Activated naive CD4-positive, alpha-beta T cell treated with anti-CD3 and anti-CD28 coated beads for 36 hours (primary cell): ENCODE measurements at regions of chr16 and their contacts with region 1.

Region 1: DNA sequence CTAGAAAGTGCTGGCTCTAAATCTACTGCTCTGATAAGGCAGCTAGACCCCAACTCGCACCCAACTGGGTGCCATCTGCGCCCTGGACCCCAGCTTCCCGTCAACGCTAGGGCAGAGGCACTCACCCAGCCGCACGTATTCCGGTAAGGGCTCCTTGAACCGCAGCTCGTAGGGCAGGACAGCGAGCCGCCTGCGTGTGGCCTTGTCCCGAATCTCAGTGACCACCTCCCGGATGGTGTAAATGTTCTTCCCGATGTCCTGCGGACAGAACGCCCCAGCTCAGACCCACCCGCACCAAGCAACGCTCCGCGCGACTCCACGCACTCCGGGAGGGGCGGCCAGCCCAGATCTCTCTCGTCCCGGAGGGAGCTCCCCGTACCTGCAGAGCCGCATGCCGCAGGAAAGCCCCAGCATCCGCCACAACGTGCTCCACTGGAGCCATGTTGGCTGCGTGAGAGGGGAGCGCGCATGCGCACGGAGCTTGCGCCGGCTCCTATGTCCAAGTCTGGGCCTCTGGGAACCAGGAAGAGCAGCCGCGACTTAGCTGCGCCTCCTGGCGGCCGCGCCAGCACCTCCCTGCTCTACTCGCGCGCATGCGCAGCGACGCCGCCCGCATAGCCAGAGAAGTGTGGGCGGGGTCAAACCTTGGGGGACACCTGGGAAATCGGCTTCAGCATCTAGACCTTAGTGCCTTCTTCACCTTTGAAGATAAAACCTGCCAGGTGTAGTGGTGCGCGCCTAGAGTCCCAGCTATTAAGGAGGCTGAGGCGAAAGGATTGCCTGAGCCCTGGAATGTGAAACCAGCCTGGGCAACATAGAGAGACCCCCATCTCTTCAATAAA is at the start of gene NOB1:
- DNase-seq: peak; percentile 98
- H3K4me3 Mint-ChIP-seq: peak within 1 kb of the TSS; percentile 97
- H3K27ac Mint-ChIP-seq: peak within 1 kb of the TSS; percentile 97
- H3K4me1 Mint-ChIP-seq: peaks cover 22% of the 10 kb centered on the region
- H3K27me3 Mint-ChIP-seq: no peaks in the 10 kb centered on the region
- total RNA-seq, gene NOB1: 110 to 114 TPM

Region 2: DNA sequence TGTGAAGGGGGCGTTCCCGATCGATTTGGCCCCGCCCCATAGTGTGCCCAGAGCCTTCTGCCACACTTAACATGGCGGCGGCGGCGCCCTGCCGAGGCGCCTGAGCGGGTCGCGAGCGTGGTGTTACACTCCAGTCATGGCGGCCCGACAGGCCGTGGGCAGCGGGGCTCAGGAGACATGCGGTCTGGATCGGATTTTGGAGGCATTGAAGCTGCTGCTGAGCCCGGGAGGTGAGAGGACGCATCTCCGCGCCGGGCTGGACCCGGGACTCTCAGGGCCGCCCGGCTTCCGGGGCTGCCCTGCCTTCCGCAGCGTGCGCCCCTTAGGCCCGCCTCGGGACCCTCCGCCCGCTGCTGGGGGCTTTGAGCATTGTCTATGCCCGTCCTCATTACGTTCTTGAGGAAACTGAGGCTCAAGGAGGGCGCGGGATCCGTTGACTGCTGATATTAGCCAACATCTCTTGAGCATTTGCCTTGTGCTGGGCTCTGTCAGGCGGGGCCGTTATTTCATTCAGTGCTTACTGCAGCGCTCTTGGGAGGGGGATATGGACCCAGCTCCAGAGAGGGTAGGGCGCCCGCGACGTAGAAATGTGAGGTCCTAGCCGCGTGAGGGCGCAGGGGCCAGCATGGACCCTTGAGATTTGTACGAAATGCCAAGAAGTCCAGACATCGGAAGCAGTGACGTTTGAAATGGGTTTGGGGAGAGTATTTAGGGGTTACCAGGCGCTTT is 911.0 kb before region 1 on chr16 and contains the start of gene TANGO6:
- CTCF ChIA-PET with region 1: interaction called, 3 read pairs
- intact Hi-C with region 1: loop called (anchors 10 kb)
- DNase-seq: peak; percentile 95
- H3K4me3 Mint-ChIP-seq: peak within 1 kb of the TSS; percentile 96
- H3K27ac Mint-ChIP-seq: peak within 1 kb of the TSS; percentile 89
- H3K4me1 Mint-ChIP-seq: peaks cover 27% of the 10 kb centered on the region
- H3K27me3 Mint-ChIP-seq: no peaks in the 10 kb centered on the region
- total RNA-seq, gene TANGO6: 21.6 to 22.3 TPM

Region 3: GRCh38 chr16:69330286-69331109 is 424.2 kb before region 1 on chr16 and contains the start of gene PDF:
- CTCF ChIA-PET with region 1: no interaction called
- intact Hi-C with region 1: loop called (anchors 2 kb)
- DNase-seq: peak; percentile 86
- H3K4me3 Mint-ChIP-seq: peak within 1 kb of the TSS; percentile 86
- H3K27ac Mint-ChIP-seq: peak within 1 kb of the TSS; percentile 85
- H3K4me1 Mint-ChIP-seq: peaks cover 53% of the 10 kb centered on the region
- H3K27me3 Mint-ChIP-seq: no peaks in the 10 kb centered on the region
- total RNA-seq, gene PDF: 12.3 to 13.9 TPM

Region 4: GRCh38 chr16:69386596-69386995 is 368.1 kb before region 1 on chr16:
- CTCF ChIA-PET with region 1: interaction called, 6 read pairs
- intact Hi-C with region 1: loop called (anchors 1 kb)
- DNase-seq: no peak
- H3K4me3 Mint-ChIP-seq: peak overlapping the region; percentile 97
- H3K27ac Mint-ChIP-seq: peak overlapping the region; percentile 92
- H3K4me1 Mint-ChIP-seq: peaks cover 29% of the 10 kb centered on the region
- H3K27me3 Mint-ChIP-seq: no peaks in the 10 kb centered on the region

Region 5: DNA sequence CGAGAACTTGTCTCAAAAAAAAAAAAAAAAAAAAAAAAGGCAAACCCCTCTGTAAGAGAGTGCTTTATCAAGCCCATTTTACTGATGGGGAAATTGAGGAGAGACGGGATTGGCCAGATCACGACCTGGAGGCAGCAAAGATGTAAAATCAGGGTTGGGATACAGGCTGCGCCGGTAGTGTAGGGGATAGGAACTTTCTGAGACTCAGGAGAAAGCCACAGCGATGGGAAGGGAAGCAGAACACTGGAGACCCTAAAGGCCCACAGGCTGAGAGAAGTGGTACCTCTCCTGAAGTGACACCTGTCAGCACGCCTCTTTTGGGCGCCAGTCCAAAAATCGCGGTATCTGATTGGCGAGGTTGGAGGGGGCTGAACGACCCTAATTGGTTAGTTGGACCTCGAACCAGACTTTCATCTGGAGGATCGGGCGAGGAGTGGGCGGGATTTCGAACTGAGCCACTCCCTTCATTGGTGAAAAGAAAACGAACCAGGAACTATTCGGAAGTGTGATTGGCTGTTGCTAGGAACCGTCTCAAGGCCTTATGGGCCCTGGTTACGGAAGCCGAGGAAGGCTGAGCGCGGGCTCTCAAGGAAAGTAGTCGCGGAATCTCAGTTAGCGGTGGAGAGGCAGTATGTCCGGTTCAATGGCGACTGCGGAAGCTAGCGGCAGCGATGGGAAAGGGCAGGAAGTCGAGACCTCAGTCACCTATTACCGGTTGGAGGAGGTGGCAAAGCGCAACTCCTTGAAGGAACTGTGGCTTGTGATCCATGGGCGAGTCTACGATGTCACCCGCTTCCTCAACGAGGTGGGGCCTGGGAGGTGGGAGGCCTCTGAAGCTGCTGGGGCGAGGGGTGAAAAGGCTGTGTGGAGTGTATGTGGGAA is 330.4 kb before region 1 on chr16 and contains the start of gene CYB5B:
- CTCF ChIA-PET with region 1: no interaction called
- intact Hi-C with region 1: loop called (anchors 1 kb)
- DNase-seq: peak; percentile 99
- H3K4me3 Mint-ChIP-seq: peak within 1 kb of the TSS; percentile 95
- H3K27ac Mint-ChIP-seq: peak within 1 kb of the TSS; percentile 93
- H3K4me1 Mint-ChIP-seq: peaks cover 40% of the 10 kb centered on the region
- H3K27me3 Mint-ChIP-seq: no peaks in the 10 kb centered on the region
- total RNA-seq, gene CYB5B: 160 to 172 TPM

Region 6: DNA sequence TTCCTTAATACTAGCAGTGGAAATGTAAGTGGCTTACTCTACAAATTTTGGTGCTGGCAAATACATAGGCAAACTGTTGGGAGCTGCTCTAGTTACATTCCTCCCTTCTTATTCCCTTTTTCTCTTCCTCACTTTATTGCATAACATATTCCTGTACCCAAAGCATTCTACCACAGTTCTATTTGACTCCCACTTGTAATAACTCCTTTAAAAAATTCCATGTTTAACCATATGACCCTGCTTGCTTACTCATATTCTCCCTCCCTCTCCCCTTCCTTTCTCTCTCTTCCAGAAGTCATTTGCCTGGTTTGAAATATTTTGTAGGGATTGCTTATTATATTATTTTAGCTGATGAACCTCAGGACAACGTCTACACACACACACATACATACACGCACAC is 51.1 kb before region 1 on chr16:
- CTCF ChIA-PET with region 1: interaction called, 58 read pairs
- intact Hi-C with region 1: no loop called
- DNase-seq: no peak
- H3K4me3 Mint-ChIP-seq: no peak overlapping the region
- H3K27ac Mint-ChIP-seq: no peak overlapping the region
- H3K4me1 Mint-ChIP-seq: no peaks in the 10 kb centered on the region
- H3K27me3 Mint-ChIP-seq: no peaks in the 10 kb centered on the region

Region 7: DNA sequence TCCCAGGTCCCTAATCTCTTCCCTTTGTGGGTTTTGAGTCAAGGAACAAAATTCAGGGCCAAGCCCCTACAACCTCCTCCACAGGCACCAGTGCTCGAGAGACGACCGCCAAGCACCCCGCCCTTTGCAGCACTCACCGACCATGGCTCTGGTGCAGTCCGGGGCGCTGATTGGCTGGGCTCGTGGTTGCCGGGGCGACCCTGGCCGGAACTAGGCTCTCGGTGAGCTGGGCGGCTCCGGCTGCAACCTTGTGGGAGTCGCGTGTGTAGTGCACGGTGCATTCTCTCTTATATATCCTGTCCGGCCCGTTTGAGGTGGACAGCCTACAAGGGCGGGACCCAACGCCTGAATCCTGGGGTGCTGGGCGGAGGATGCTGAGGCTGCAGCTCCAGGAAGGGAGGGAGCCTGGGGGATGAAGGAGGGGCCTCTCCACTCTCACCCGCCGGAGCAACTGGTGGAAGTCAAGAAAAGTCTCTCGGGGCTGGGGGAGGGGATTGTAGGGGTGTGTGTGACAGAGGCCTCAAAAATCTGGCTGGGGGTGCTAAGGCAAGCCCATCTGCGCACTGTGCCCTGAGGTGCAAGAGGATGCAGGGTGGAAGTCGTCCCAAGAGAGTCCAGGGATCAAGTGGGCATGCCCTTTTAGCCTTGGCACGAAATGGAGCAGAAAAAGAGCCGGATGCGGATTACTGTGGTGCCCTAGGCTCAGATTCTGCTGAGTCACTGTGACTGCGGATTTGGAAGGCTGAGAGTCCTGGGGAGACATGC is 28.2 kb before region 1 on chr16 and contains the start of gene NQO1:
- CTCF ChIA-PET with region 1: interaction called, 14 read pairs
- intact Hi-C with region 1: loop called (anchors 1 kb)
- DNase-seq: peak; percentile 95
- H3K4me3 Mint-ChIP-seq: peak within 1 kb of the TSS; percentile 99
- H3K27ac Mint-ChIP-seq: peak within 1 kb of the TSS; percentile 92
- H3K4me1 Mint-ChIP-seq: peaks cover 27% of the 10 kb centered on the region
- H3K27me3 Mint-ChIP-seq: no peaks in the 10 kb centered on the region
- total RNA-seq, gene NQO1: 11.6 to 11.9 TPM

Region 8: DNA sequence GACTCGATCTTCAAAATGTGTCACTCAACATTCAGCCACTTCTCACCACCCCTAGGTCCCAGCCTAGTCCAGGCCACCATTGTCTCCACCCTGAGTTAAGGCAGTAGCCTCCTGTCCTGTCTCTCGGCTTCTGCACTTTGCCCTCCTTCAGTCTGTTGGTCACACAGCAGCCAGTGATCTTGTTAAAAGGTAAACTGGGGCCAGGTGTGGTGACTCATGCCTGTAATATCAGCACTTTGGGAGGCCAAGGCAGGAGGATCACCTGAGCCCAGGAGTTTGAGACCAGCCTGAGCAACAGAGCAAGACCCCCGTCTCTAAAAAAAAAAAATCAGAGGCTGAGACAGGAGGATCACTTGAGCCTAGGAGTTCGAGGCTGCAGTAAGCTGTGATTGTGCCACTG is 33.2 kb after region 1 on chr16:
- CTCF ChIA-PET with region 1: no interaction called
- intact Hi-C with region 1: no loop called
- DNase-seq: no peak
- H3K4me3 Mint-ChIP-seq: no peak overlapping the region
- H3K27ac Mint-ChIP-seq: no peak overlapping the region
- H3K4me1 Mint-ChIP-seq: no peaks in the 10 kb centered on the region
- H3K27me3 Mint-ChIP-seq: no peaks in the 10 kb centered on the region

Region 9: GRCh38 chr16:69798466-69798865 is 43.8 kb after region 1 on chr16:
- CTCF ChIA-PET with region 1: no interaction called
- intact Hi-C with region 1: no loop called
- DNase-seq: no peak
- H3K4me3 Mint-ChIP-seq: no peak overlapping the region
- H3K27ac Mint-ChIP-seq: no peak overlapping the region
- H3K4me1 Mint-ChIP-seq: no peaks in the 10 kb centered on the region
- H3K27me3 Mint-ChIP-seq: no peaks in the 10 kb centered on the region